Panc1 (cell line): ENCODE measurements at regions of chr17 and their contacts with region 1.

Region 1: DNA sequence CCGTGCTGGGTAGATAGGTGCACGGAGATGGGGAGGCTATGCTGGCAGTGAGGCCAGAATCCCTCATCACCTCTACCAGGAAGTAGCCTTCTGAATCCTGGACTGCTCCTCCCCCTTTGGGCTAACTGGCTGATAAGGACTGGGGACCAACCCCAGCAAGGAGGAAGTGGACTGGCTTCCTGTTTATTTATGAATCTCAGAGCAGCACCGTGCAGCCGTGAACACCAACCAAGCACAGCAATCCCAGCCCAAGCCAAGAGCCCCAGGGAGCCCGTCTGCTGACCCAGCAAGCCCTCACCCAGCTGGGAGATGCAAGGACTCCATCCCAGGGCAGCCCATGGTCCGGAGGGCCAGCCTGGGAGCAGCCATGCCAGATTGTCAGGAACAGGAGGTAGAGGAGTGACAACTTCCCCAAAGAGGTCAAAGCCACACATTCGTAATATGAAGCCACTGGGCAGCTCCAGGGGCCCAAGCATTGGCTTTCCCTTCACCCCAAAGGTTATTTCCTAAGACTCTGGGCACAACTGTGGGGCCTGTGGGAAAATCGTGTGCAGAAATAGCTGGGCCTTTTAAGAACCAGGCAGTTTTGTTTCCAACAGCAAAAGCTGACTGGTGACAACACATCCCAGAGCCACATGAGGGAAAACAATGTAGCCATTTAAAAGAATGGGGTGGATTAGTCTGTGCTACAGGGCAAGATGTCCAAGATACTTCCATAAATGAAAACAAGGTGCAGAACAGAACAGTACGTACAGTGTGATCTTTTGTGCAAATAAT is 23.9 kb downstream of the PHB1 start:
- DNase-seq: no peak
- ATAC-seq: no peak
- H3K4me3 ChIP-seq: no peak overlapping the region
- H3K27ac ChIP-seq: peak overlapping the region; percentile 11; the same call in 1 of the 2 replicates
- H3K4me1 ChIP-seq: peaks cover 7% of the 10 kb centered on the region
- H3K27me3 ChIP-seq: no peaks in the 10 kb centered on the region
- CTCF ChIP-seq: no peak

Region 2: DNA sequence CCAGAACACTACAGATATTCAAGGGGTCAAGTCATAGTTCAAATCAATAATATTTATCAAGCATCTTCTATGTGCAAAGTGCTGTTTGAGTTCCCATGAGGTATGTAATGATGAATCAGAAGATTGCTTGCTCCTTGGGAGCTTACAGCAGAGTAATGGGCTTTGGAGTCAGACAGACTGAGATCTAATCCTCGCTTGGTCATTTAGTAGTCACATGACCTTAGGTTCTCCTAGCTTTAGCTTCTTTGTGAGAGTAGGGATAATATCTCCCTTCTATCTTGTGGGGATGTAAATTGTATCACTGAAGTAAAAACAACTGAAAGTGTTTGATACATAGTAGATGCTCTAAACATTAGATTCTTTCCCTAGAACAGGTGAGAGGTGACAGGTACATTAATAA is 1253.1 kb before region 1 on chr17:
- CTCF ChIA-PET with region 1: no interaction called
- POLR2A ChIA-PET with region 1: interaction called, 10 read pairs
- in situ Hi-C with region 1: no loop called
- intact Hi-C with region 1: no loop called
- DNase-seq: no peak
- ATAC-seq: no peak
- H3K4me3 ChIP-seq: no peak overlapping the region
- H3K27ac ChIP-seq: no peak overlapping the region
- H3K4me1 ChIP-seq: no peaks in the 10 kb centered on the region
- H3K27me3 ChIP-seq: no peaks in the 10 kb centered on the region
- CTCF ChIP-seq: no peak

Region 3: GRCh38 chr17:49170216-49170615 is 220.5 kb before region 1 on chr17:
- CTCF ChIA-PET with region 1: no interaction called
- POLR2A ChIA-PET with region 1: no interaction called
- in situ Hi-C with region 1: no loop called
- intact Hi-C with region 1: no loop called
- DNase-seq: no peak
- ATAC-seq: no peak
- H3K4me3 ChIP-seq: no peak overlapping the region
- H3K27ac ChIP-seq: no peak overlapping the region
- H3K4me1 ChIP-seq: no peaks in the 10 kb centered on the region
- H3K27me3 ChIP-seq: peaks cover 36% of the 10 kb centered on the region
- CTCF ChIP-seq: no peak

Region 4: GRCh38 chr17:49290690-49291359 is 99.9 kb before region 1 on chr17:
- CTCF ChIA-PET with region 1: no interaction called
- POLR2A ChIA-PET with region 1: no interaction called
- in situ Hi-C with region 1: loop called (anchors 5 kb)
- intact Hi-C with region 1: no loop called
- DNase-seq: peak; percentile 12
- ATAC-seq: peak; percentile 72
- H3K4me3 ChIP-seq: no peak overlapping the region
- H3K27ac ChIP-seq: no peak overlapping the region
- H3K4me1 ChIP-seq: no peaks in the 10 kb centered on the region
- H3K27me3 ChIP-seq: no peaks in the 10 kb centered on the region
- CTCF ChIP-seq: peak; percentile 77

Region 5: GRCh38 chr17:49315551-49316257 is 75.0 kb before region 1 on chr17:
- CTCF ChIA-PET with region 1: interaction called, 8 read pairs
- POLR2A ChIA-PET with region 1: no interaction called
- in situ Hi-C with region 1: no loop called
- intact Hi-C with region 1: loop called (anchors 1 kb)
- DNase-seq: peak; percentile 73
- ATAC-seq: peak; percentile 99
- H3K4me3 ChIP-seq: peak overlapping the region in 1 of 2 experiments; percentile 19; a peak in 2 of 4 replicates
- H3K27ac ChIP-seq: peak overlapping the region; percentile 58
- H3K4me1 ChIP-seq: peaks cover 23% of the 10 kb centered on the region
- H3K27me3 ChIP-seq: no peaks in the 10 kb centered on the region
- CTCF ChIP-seq: peak; percentile 94

Region 6: GRCh38 chr17:49337884-49338283 is 52.9 kb before region 1 on chr17:
- CTCF ChIA-PET with region 1: no interaction called
- POLR2A ChIA-PET with region 1: no interaction called
- in situ Hi-C with region 1: no loop called
- intact Hi-C with region 1: no loop called
- DNase-seq: no peak
- ATAC-seq: no peak
- H3K4me3 ChIP-seq: no peak overlapping the region
- H3K27ac ChIP-seq: no peak overlapping the region
- H3K4me1 ChIP-seq: peaks cover 5% of the 10 kb centered on the region; the same call in 1 of the 2 replicates
- H3K27me3 ChIP-seq: no peaks in the 10 kb centered on the region
- CTCF ChIP-seq: no peak